ENCODE measurements at regions of chr15 and their contacts with region 1.

Region 1: GRCh38 chr15:62886431-62887071 is 156.0 kb upstream of the TPM1 start:
- DNase-seq: peak; percentile 41 to 46
- ATAC-seq: peak; percentile 53 to 68; a peak in 5 of 6 replicates
- H3K4me3 ChIP-seq: no peak overlapping the region
- H3K27ac ChIP-seq: peak overlapping the region; percentile 66 to 89
- H3K4me1 ChIP-seq: peaks cover 46% of the 10 kb centered on the region
- CTCF ChIP-seq: no peak
- EP300 ChIP-seq: no peak
- POLR2A ChIP-seq: no peak
- RAD21 ChIP-seq: no peak

Region 2: DNA sequence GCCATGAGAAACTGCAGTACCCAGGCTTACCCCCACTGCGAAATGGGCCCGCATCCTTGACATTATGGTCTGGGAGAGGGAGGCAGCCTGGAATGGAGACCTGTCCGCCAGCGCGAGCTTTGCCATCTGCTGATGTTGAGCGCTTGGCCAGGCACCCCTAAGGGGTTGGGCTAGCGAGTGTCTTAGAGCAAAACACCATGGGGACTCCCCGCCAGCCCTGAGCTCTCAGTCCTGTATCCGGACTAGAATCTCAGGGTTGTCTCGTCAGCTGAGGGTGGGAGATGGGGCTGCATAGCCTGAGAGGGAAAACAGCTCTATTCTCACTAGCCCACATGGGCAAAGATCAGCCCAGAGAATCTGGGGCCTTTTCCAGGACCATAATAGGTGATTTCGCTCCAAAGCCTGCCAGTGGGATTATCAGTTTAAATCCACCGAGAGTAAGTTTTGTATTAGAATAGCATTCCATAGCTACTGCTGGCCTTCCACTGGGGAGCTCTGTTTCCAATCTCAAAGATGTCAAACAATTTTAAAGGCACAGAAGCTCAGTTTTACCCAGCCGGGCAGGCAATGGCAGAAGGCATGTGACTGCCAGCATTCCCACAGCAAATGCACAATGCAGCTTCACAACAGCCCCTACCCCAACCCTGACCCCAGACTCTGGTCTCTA is 11.5 kb before region 1 on chr15:
- CTCF ChIA-PET with region 1: interaction called, 14 read pairs
- POLR2A ChIA-PET with region 1: no interaction called
- DNase-seq: no peak
- ATAC-seq: no peak
- H3K4me3 ChIP-seq: no peak overlapping the region
- H3K27ac ChIP-seq: peak overlapping the region in 1 of 2 experiments; percentile 30; a peak in 2 of 6 replicates
- H3K4me1 ChIP-seq: no peaks in the 10 kb centered on the region
- CTCF ChIP-seq: no peak
- EP300 ChIP-seq: no peak
- POLR2A ChIP-seq: no peak
- RAD21 ChIP-seq: no peak

Region 3: DNA sequence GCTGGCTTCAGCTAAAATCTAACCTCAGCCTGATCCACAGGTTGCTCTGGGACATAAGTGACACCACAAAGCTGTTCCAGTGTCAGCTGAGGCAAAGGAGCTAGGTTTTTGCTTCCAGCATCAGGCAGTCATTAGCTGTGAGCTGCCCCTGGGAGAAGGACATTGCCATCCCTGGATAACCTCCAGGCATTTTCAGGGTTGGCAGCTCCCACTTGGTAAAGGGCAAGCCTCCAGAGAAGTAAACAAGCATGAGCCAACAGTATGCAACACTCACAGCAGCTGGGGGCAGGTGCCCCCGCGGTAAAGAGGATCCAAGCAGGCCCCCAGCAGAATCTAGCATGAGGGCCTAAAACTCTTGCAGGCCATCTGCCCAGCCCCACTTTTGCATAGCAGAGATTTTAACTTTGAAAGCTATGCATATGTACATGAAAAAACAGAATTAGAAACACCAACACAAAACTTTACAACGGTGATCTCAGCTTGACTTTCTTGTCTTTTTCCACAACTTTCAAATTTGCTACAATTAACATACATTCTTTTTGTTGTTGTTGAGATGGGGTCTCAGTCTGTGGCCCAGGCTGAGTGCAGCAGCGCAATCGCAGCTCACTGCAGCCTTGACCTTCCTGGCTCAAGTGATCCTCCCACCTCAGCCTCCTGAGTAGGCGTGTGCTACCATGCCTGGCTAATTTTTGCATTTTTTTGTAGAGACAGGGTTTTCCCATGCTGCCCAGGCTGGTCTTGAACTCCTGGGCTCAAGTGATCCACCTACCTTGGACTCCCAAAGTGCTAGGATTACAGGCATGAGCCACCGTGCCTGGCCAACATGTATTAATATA is 72.2 kb after region 1 on chr15:
- CTCF ChIA-PET with region 1: no interaction called
- POLR2A ChIA-PET with region 1: no interaction called
- DNase-seq: no peak
- ATAC-seq: peak; percentile 25 to 42; a peak in 3 of 6 replicates
- H3K4me3 ChIP-seq: no peak overlapping the region
- H3K27ac ChIP-seq: peak overlapping the region; percentile 48 to 74
- H3K4me1 ChIP-seq: peaks cover 25% of the 10 kb centered on the region
- CTCF ChIP-seq: no peak
- EP300 ChIP-seq: no peak
- POLR2A ChIP-seq: no peak
- RAD21 ChIP-seq: 0 out of 5 replicates have a peak, but pooled peaks of 1 of the 2 experiments have one; percentile 17

Measured in A549 (cell line).